ENCODE measurements at regions of chr7 and their contacts with region 1.

Region 1: GRCh38 chr7:157273208-157274093 is 63.4 kb upstream of the DNAJB6 start:
- DNase-seq: peak; percentile 85
- H3K4me3 ChIP-seq: no peak overlapping the region
- H3K27ac ChIP-seq: peak overlapping the region in 1 of 4 donors; percentile 78
- H3K4me1 ChIP-seq: peaks cover 0 to 35% (median 27%) of the 10 kb centered on the region in 4 donors
- H3K27me3 ChIP-seq: peaks cover 0 to 4% (median under 1%) of the 10 kb centered on the region in 3 donors
- CTCF ChIP-seq: peak; percentile 85 to 99 (median 90)
- EP300 ChIP-seq: no peak
- POLR2A ChIP-seq: no peak

Region 2: GRCh38 chr7:156892821-156893706 is 380.4 kb before region 1 on chr7 and contains the start of gene LMBR1:
- intact Hi-C with region 1: loop called (anchors 5 kb)
- DNase-seq: peak; percentile 97
- H3K4me3 ChIP-seq: peak within 1 kb of the TSS; percentile 58 to 94 (median 84)
- H3K27ac ChIP-seq: peak within 1 kb of the TSS; percentile 91 to 97 (median 92)
- H3K4me1 ChIP-seq: peaks cover 0 to 17% (median 9%) of the 10 kb centered on the region in 4 donors
- H3K27me3 ChIP-seq: no peaks in the 10 kb centered on the region
- CTCF ChIP-seq: peak; percentile 67 to 97 (median 84)
- EP300 ChIP-seq: peak in 1 of 4 donors; percentile 43
- POLR2A ChIP-seq: peak in 1 of 2 donors; percentile 38
- total RNA-seq, gene LMBR1: 43.9 to 60.9 (median 51.2) TPM

Region 3: DNA sequence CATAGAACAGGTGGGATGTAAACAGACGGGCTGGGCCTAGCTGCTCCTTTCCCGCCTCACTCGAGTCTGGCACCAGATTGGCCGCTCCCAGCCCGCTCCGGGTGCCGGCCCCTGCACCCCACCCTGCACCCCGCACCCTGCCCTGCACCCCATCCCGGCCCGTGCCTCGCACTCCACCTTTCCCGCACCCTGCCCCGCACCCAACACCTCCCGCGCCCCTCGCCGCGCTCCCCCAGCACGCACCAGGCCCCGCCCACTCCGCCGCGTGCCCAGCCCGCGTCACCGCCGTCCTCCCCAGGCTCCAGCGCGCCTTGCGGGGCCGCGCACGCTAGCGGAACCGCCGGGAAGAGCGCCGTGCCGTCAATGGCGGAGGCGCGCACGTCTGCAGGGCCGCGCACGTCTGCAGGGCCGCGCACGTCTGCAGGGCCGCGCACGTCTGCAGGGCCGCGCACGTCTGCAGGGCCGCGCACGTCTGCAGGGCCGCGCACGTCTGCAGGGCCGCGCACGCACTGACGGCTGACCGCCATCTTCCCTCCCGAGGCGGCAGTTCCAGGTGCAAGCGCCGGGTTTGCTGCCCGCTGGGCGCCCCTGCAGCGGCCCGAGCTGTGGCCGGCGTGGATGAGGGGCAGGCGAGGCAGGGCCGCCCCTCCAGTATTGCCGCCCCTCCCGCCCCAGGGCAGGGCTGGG is 134.9 kb before region 1 on chr7 and contains the start of gene UBE3C:
- intact Hi-C with region 1: loop called (anchors 5 kb)
- DNase-seq: peak; percentile 93
- H3K4me3 ChIP-seq: peak within 1 kb of the TSS; percentile 61 to 80 (median 72)
- H3K27ac ChIP-seq: peak within 1 kb of the TSS; percentile 88 to 94 (median 90)
- H3K4me1 ChIP-seq: peaks cover 0 to 34% (median 25%) of the 10 kb centered on the region in 4 donors
- H3K27me3 ChIP-seq: no peaks in the 10 kb centered on the region
- CTCF ChIP-seq: no peak
- EP300 ChIP-seq: no peak
- POLR2A ChIP-seq: peak in 1 of 2 donors; percentile 13
- total RNA-seq, gene UBE3C: 55.7 to 84.2 (median 70.5) TPM

Region 4: DNA sequence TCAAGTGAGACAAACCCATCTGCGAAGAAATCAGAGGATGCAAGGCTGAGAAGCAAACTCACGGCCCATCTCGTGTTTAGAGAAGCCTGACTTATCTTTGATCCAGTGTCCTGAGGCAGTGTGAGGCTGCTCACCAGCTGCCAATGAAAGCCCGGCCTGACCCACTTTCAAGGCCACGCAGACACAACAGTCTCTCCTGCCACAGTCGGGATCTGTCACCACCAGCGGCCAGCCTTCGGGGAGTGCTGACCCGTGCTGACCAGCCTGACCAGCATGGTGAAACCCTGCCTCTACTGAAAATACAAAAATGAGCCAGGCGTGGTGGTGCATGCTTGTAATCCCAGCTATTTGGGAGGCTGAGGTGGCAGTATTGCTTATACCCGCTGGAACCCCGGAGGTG is 56.0 kb after region 1 on chr7:
- intact Hi-C with region 1: no loop called
- DNase-seq: no peak
- H3K4me3 ChIP-seq: no peak overlapping the region
- H3K27ac ChIP-seq: no peak overlapping the region
- H3K4me1 ChIP-seq: no peaks in the 10 kb centered on the region
- H3K27me3 ChIP-seq: peaks cover 0 to 4% (median 0%) of the 10 kb centered on the region in 3 donors
- CTCF ChIP-seq: no peak
- EP300 ChIP-seq: no peak
- POLR2A ChIP-seq: no peak

Measured in sigmoid colon (tissue), 7 donors.